ENCODE measurements at regions of chr14 and their contacts with region 1.

Region 1: DNA sequence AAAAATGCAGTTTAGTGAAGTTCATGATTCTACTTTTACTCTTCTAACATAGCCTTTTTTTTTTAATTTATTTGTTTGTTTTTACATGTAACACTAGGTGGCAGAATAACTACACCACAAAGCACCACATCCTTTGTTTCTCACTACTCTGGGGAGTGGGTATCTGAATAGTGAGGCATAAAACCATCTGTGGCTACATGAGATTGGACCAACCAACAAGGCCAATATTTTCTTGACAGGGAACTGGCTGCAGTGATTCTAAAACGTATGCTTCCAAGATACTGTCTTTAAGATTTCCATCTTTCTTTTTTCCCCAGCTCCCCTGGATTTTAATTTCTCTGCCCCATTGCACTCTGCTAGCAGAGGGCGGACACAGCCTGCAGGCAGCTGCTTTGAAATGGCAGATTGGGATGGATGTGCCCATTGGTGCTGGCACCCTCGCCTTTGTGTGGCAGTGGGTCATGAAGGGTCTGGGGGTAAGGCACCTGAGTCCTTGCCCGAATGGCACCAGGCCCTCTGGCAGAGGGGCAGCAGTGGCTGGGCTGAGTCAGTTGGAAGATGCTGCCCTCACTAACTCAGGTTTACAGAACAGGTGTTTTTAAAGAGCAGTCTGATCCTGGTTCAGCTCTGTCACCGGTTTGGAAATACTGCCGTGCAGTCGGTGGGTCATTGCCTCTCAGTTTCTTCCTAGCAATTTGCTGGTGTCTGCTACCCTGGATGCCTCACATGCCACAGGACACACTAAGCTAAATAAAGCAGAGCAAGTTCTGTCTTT is 429.1 kb downstream of the RAD51B start:
- DNase-seq: peak; percentile 33 to 48
- H3K4me3 ChIP-seq: no peak overlapping the region
- H3K27ac ChIP-seq: peak overlapping the region; percentile 93
- H3K4me1 ChIP-seq: peaks cover 66% of the 10 kb centered on the region
- H3K27me3 ChIP-seq: no peaks in the 10 kb centered on the region
- CTCF ChIP-seq: peak; percentile 90

Region 2: DNA sequence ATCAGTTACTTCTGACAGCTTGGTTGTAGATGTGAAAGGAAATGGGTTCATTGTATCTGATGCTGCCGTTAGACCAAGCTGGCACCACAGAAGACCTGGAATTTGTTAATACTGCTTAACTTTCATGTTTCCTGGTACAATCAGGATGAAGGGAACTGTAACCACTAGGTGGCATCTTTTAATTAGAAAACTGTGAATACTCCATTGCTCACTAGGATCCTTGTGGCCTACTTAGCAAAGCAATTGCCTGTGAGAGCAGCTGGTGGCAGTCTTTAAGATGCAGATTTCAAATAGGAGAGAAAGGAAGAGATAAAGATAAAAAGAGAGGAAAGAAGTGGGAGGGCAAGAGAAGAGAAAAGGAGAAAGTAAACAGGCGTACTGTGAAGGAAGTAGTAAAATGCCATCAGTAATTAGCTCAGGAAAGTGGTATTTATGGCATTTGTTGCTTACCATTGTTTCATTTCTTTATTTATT is 314.6 kb before region 1 on chr14:
- CTCF ChIA-PET with region 1: interaction called, 3 read pairs
- POLR2A ChIA-PET with region 1: no interaction called
- intact Hi-C with region 1: loop called (anchors 1 kb)
- DNase-seq: peak in 1 of 2 experiments; percentile 64
- H3K4me3 ChIP-seq: no peak overlapping the region
- H3K27ac ChIP-seq: no peak overlapping the region
- H3K4me1 ChIP-seq: 0 out of 2 replicates have a peak, but pooled peaks cover 7% of the 10 kb centered on the region
- H3K27me3 ChIP-seq: no peaks in the 10 kb centered on the region
- CTCF ChIP-seq: peak; percentile 79

Region 3: DNA sequence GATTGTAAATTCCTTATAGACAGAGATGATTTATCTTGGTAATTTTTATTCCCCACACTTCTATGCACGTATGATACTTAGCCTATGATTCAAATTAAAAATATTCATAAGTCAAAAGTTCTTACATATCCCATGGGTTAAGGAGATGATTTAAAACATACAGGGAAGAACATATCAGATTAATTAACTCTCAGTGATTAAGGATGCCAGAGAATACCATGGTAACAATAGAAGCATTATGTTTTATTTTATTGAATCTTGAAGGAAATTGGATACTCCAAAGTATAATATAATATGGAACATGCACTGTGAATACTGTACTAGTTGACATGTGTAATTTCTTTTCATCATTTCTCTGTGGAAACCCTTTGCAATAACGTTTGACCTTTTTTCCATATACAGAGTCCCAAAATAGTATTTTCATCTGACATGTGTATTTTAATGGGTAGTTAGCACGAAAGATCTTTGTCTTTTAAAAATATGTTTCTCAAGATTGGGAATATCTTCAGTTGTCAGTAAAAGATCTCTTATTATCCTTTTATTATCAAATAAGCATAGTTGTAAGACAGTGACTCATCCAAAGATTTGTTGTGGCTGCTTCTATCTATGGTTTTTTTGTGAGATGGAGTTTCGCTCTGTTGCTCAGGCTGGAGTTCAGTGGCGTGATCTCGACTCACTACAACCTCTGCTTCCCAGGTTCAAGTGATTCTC is 262.4 kb before region 1 on chr14:
- CTCF ChIA-PET with region 1: no interaction called
- POLR2A ChIA-PET with region 1: no interaction called
- intact Hi-C with region 1: no loop called
- DNase-seq: no peak
- H3K4me3 ChIP-seq: no peak overlapping the region
- H3K27ac ChIP-seq: no peak overlapping the region
- H3K4me1 ChIP-seq: no peaks in the 10 kb centered on the region
- H3K27me3 ChIP-seq: no peaks in the 10 kb centered on the region
- CTCF ChIP-seq: no peak

Region 4: GRCh38 chr14:68146807-68147206 is 101.9 kb before region 1 on chr14:
- CTCF ChIA-PET with region 1: no interaction called
- POLR2A ChIA-PET with region 1: no interaction called
- intact Hi-C with region 1: loop called (anchors 1 kb)
- DNase-seq: peak; percentile 71 to 98
- H3K4me3 ChIP-seq: no peak overlapping the region
- H3K27ac ChIP-seq: peak overlapping the region; percentile 90
- H3K4me1 ChIP-seq: peaks cover 37% of the 10 kb centered on the region
- H3K27me3 ChIP-seq: no peaks in the 10 kb centered on the region
- CTCF ChIP-seq: no peak

Region 5: GRCh38 chr14:68458840-68459469 is 210.3 kb after region 1 on chr14:
- CTCF ChIA-PET with region 1: no interaction called
- POLR2A ChIA-PET with region 1: interaction called, 4 read pairs
- intact Hi-C with region 1: loop called (anchors 1 kb)
- DNase-seq: peak; percentile 85 to 97
- H3K4me3 ChIP-seq: peak overlapping the region; percentile 25; the same call in 1 of the 2 replicates
- H3K27ac ChIP-seq: peak overlapping the region; percentile 93
- H3K4me1 ChIP-seq: peaks cover 77% of the 10 kb centered on the region
- H3K27me3 ChIP-seq: no peaks in the 10 kb centered on the region
- CTCF ChIP-seq: no peak

Region 6: DNA sequence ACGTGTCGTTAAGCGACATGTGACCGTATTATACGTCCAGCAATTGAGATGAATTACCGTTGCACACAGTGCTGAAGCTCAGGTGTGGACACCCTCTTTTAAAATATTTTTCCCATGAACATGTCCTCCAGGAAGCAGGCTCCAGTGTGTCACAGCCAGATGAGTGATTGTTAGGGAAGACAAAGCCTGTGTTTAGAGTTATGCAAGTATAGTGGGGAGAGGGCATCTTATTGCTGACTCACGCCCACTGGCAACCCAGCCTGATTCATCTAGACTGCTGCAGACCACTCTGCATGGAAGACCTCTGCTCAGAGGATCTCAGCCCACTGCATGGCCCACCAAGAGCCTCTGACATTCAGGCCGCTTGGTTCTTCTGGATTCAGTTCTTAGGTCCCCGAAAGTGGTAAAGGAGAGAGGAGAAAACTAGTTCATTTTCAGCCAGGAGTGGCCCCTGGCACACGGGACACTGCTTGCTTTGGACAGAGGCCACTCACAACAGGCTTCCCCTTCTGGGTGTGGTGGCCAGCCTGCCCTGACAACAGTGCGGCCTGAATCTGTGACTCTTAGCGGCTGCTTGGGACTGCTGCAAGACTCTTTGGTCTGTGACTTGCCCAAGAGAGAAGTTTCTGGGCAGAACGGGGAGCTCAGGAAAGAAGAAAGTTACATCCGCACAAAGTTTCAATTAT is 277.9 kb after region 1 on chr14:
- CTCF ChIA-PET with region 1: no interaction called
- POLR2A ChIA-PET with region 1: no interaction called
- intact Hi-C with region 1: loop called (anchors 2 kb)
- DNase-seq: peak; percentile 71 to 74
- H3K4me3 ChIP-seq: no peak overlapping the region
- H3K27ac ChIP-seq: peak overlapping the region; percentile 87
- H3K4me1 ChIP-seq: peaks cover 45% of the 10 kb centered on the region
- H3K27me3 ChIP-seq: no peaks in the 10 kb centered on the region
- CTCF ChIP-seq: no peak

Region 7: GRCh38 chr14:68685419-68686204 is 436.9 kb after region 1 on chr14:
- CTCF ChIA-PET with region 1: no interaction called
- POLR2A ChIA-PET with region 1: interaction called, 13 read pairs
- intact Hi-C with region 1: loop called (anchors 2 kb)
- DNase-seq: peak; percentile 68 to 97
- H3K4me3 ChIP-seq: no peak overlapping the region
- H3K27ac ChIP-seq: peak overlapping the region; percentile 90
- H3K4me1 ChIP-seq: peaks cover 87% of the 10 kb centered on the region
- H3K27me3 ChIP-seq: no peaks in the 10 kb centered on the region
- CTCF ChIP-seq: no peak